HepG2 (cell line): ENCODE measurements at regions of chr20 and their contacts with region 1.

Region 1: GRCh38 chr20:56171087-56172012 is 77.2 kb upstream of the MC3R start:
- DNase-seq: peak; percentile 41
- ATAC-seq: peak; percentile 94
- H3K4me3 ChIP-seq: no peak overlapping the region
- H3K27ac ChIP-seq: no peak overlapping the region
- H3K4me1 ChIP-seq: no peaks in the 10 kb centered on the region
- H3K27me3 ChIP-seq: no peaks in the 10 kb centered on the region
- CTCF ChIP-seq: peak; percentile 69
- EP300 ChIP-seq: no peak
- POLR2A ChIP-seq: no peak
- RAD21 ChIP-seq: peak; percentile 57; the same call in 1 of the 2 replicates

Region 2: GRCh38 chr20:55415567-55416142 is 755.7 kb before region 1 on chr20:
- CTCF ChIA-PET with region 1: no interaction called
- POLR2A ChIA-PET with region 1: no interaction called
- in situ Hi-C with region 1: no loop called
- intact Hi-C with region 1: loop called (anchors 5 kb)
- DNase-seq: peak; percentile 21
- ATAC-seq: peak; percentile 44; the same call in 2 of the 3 replicates
- H3K4me3 ChIP-seq: no peak overlapping the region
- H3K27ac ChIP-seq: no peak overlapping the region
- H3K4me1 ChIP-seq: no peaks in the 10 kb centered on the region
- H3K27me3 ChIP-seq: no peaks in the 10 kb centered on the region; a peak in 1 of 5 replicates
- CTCF ChIP-seq: peak; percentile 70
- EP300 ChIP-seq: no peak
- POLR2A ChIP-seq: no peak
- RAD21 ChIP-seq: peak; percentile 67

Region 3: GRCh38 chr20:56043227-56043626 is 128.1 kb before region 1 on chr20:
- CTCF ChIA-PET with region 1: no interaction called
- POLR2A ChIA-PET with region 1: no interaction called
- in situ Hi-C with region 1: no loop called
- intact Hi-C with region 1: no loop called
- DNase-seq: no peak
- ATAC-seq: no peak
- H3K4me3 ChIP-seq: no peak overlapping the region
- H3K27ac ChIP-seq: no peak overlapping the region
- H3K4me1 ChIP-seq: no peaks in the 10 kb centered on the region
- H3K27me3 ChIP-seq: no peaks in the 10 kb centered on the region
- CTCF ChIP-seq: no peak
- EP300 ChIP-seq: no peak
- POLR2A ChIP-seq: no peak
- RAD21 ChIP-seq: no peak

Region 4: GRCh38 chr20:56257604-56258003 is 86.3 kb after region 1 on chr20:
- CTCF ChIA-PET with region 1: no interaction called
- POLR2A ChIA-PET with region 1: no interaction called
- in situ Hi-C with region 1: no loop called
- intact Hi-C with region 1: no loop called
- DNase-seq: no peak
- ATAC-seq: no peak
- H3K4me3 ChIP-seq: no peak overlapping the region
- H3K27ac ChIP-seq: no peak overlapping the region
- H3K4me1 ChIP-seq: no peaks in the 10 kb centered on the region
- H3K27me3 ChIP-seq: peaks cover 0 to 3% of the 10 kb centered on the region in 2 experiments; a peak in 1 of 5 replicates
- CTCF ChIP-seq: no peak
- EP300 ChIP-seq: no peak
- POLR2A ChIP-seq: no peak
- RAD21 ChIP-seq: no peak

Region 5: DNA sequence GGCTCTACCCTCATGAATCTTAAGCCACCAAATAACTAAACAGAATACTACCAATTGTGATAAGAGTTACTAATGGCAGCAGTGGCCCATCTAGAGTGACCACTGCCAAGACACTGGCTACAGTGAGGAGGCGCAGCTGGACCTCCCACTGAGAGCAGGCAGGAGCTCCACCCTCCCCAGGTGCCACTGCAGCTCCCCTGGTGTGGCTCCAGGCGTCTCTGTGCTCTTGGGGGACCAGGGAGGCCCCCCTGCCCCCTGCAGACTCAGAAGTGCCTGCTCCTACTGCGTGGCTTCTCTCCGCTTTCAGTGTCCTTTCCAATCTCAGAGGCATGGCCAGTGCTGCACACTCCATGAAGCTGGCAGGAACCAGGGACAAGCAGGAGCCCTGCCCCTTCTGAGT is 100.6 kb after region 1 on chr20:
- CTCF ChIA-PET with region 1: no interaction called
- POLR2A ChIA-PET with region 1: no interaction called
- in situ Hi-C with region 1: no loop called
- intact Hi-C with region 1: no loop called
- DNase-seq: no peak
- ATAC-seq: no peak
- H3K4me3 ChIP-seq: no peak overlapping the region
- H3K27ac ChIP-seq: no peak overlapping the region
- H3K4me1 ChIP-seq: no peaks in the 10 kb centered on the region
- H3K27me3 ChIP-seq: no peaks in the 10 kb centered on the region
- CTCF ChIP-seq: no peak
- EP300 ChIP-seq: no peak
- POLR2A ChIP-seq: no peak
- RAD21 ChIP-seq: no peak